ENCODE measurements at regions of chr10 and their contacts with region 1.

Region 1: DNA sequence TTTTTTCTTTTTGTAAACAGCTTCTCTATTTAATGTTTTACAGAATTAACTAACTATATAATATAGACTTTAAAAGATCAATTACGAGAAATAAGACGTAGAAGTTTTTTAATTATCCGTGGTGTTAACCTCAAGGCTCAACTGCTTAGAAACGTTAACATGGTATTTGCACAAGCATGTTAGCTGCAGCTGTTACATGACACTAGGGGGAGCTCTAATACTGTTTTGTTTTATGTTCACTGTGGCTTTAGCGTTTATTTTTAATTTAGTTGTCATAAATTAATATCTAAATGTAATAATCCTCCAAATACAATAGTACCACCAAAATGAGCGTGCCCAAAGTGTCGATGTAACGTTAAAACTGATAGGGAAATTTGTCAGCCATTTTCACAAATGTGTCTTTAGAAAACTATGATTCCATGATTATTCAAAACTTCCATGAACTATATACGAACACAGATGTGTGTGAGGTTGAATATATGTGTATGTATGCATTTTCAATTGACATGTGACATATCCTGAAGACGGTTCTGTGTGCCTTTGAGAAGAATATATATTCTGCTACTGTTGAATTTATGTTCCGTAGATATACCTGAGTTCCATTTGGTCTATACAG is 828.8 kb upstream of the MBL2 start:
- DNase-seq: peak; percentile 12 to 44 (median 24)
- ATAC-seq: peak; percentile 64; the same call in 1 of the 3 replicates
- H3K4me3 ChIP-seq: no peak overlapping the region
- H3K27ac ChIP-seq: no peak overlapping the region
- H3K4me1 ChIP-seq: no peaks in the 10 kb centered on the region
- H3K27me3 ChIP-seq: no peaks in the 10 kb centered on the region
- CTCF ChIP-seq: peak; percentile 23 to 75 (median 67); a peak in 4 of 6 replicates
- EP300 ChIP-seq: no peak
- POLR2A ChIP-seq: no peak
- RAD21 ChIP-seq: peak; percentile 62 to 80

Region 2: DNA sequence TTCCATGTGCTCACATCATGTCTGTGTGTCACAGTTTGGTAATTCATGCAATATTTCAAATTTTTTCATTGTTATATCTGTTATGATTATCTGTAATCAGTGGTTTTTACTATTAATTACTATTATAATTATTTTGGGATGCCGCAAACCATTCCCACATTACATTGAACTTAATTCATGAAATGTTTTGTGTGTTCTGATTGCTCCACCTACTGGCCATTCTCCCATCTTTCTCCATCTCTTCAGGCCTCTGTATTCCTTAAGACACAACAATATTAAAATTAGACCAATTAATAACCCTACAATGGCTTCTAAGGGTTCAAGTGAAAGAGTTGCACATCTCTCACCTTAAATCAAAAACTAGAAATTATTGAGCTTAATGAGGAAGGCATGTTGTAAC is 801.2 kb after region 1 on chr10:
- CTCF ChIA-PET with region 1: no interaction called
- POLR2A ChIA-PET with region 1: no interaction called
- in situ Hi-C with region 1: no loop called
- intact Hi-C with region 1: loop called (anchors 5 kb)
- DNase-seq: peak in 1 of 4 experiments; percentile 3
- ATAC-seq: no peak
- H3K4me3 ChIP-seq: no peak overlapping the region
- H3K27ac ChIP-seq: no peak overlapping the region
- H3K4me1 ChIP-seq: no peaks in the 10 kb centered on the region
- H3K27me3 ChIP-seq: no peaks in the 10 kb centered on the region
- CTCF ChIP-seq: peak in 1 of 3 experiments; percentile 9; a peak in 1 of 6 replicates
- EP300 ChIP-seq: no peak
- POLR2A ChIP-seq: no peak
- RAD21 ChIP-seq: no peak

Region 3: GRCh38 chr10:54484186-54484585 is 882.8 kb after region 1 on chr10:
- CTCF ChIA-PET with region 1: no interaction called
- POLR2A ChIA-PET with region 1: no interaction called
- in situ Hi-C with region 1: no loop called
- intact Hi-C with region 1: no loop called
- DNase-seq: no peak
- ATAC-seq: no peak
- H3K4me3 ChIP-seq: no peak overlapping the region
- H3K27ac ChIP-seq: no peak overlapping the region
- H3K4me1 ChIP-seq: no peaks in the 10 kb centered on the region
- H3K27me3 ChIP-seq: no peaks in the 10 kb centered on the region
- CTCF ChIP-seq: no peak
- EP300 ChIP-seq: no peak
- POLR2A ChIP-seq: no peak
- RAD21 ChIP-seq: no peak

Region 4: DNA sequence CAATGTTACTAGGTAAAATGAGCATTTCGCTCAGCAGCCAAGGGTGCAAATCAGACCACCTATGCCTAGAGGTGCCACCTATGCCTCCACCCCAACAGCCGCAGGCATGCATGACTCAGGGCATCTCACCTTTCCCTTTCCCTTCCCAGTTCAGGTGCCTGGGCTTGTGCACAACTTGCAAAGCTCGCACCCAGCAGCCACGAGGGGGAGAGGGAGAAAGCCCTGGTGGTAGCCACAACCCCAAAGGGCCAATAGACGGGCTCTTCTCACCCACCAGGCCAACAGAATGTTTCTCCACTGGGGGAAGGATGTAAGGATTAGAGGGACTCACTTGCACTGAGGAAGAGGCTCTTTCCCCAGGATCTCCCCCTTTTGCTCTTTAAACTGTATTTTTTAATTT is 1662.0 kb after region 1 on chr10:
- CTCF ChIA-PET with region 1: no interaction called
- POLR2A ChIA-PET with region 1: no interaction called
- in situ Hi-C with region 1: no loop called
- intact Hi-C with region 1: loop called (anchors 10 kb)
- DNase-seq: no peak
- ATAC-seq: no peak
- H3K4me3 ChIP-seq: no peak overlapping the region
- H3K27ac ChIP-seq: no peak overlapping the region
- H3K4me1 ChIP-seq: no peaks in the 10 kb centered on the region
- H3K27me3 ChIP-seq: no peaks in the 10 kb centered on the region
- CTCF ChIP-seq: no peak
- EP300 ChIP-seq: no peak
- POLR2A ChIP-seq: no peak
- RAD21 ChIP-seq: no peak

Measured in K562 (cell line).